B cell (primary cell): ENCODE measurements at regions of chr1 and their contacts with region 1.

Region 1: GRCh38 chr1:77759071-77760028 is at the start of gene USP33:
- DNase-seq: peak; percentile 92
- ATAC-seq: peak; percentile 98
- H3K4me3 ChIP-seq: peak within 1 kb of the TSS; percentile 75 to 91 (median 79)
- H3K4me3 Mint-ChIP-seq: peak within 1 kb of the TSS; percentile 95
- H3K27ac ChIP-seq: peak within 1 kb of the TSS; percentile 31 to 81
- H3K27ac Mint-ChIP-seq: peak within 1 kb of the TSS; percentile 88
- H3K4me1 ChIP-seq: peaks cover 14 to 25% of the 10 kb centered on the region in 2 donors
- H3K4me1 Mint-ChIP-seq: peaks cover 32% of the 10 kb centered on the region
- H3K27me3 ChIP-seq: no peaks in the 10 kb centered on the region
- H3K27me3 Mint-ChIP-seq: peaks cover 3% of the 10 kb centered on the region
- CTCF ChIP-seq: no peak
- total RNA-seq, gene USP33: 83.4 and 95.6 TPM in 2 replicates

Region 2: GRCh38 chr1:77219166-77219887 is 540.0 kb before region 1 on chr1 and contains the start of gene PIGK:
- CTCF ChIA-PET with region 1: no interaction called
- POLR2A ChIA-PET with region 1: no interaction called
- intact Hi-C with region 1: loop called (anchors 5 kb)
- DNase-seq: peak; percentile 89
- ATAC-seq: peak; percentile 96
- H3K4me3 ChIP-seq: peak within 1 kb of the TSS; percentile 85 to 94 (median 93)
- H3K4me3 Mint-ChIP-seq: peak within 1 kb of the TSS; percentile 96
- H3K27ac ChIP-seq: peak within 1 kb of the TSS; percentile 71 to 83
- H3K27ac Mint-ChIP-seq: peak within 1 kb of the TSS; percentile 91
- H3K4me1 ChIP-seq: peaks cover 9 to 11% of the 10 kb centered on the region in 2 donors
- H3K4me1 Mint-ChIP-seq: peaks cover 26% of the 10 kb centered on the region
- H3K27me3 ChIP-seq: no peaks in the 10 kb centered on the region
- H3K27me3 Mint-ChIP-seq: no peaks in the 10 kb centered on the region
- CTCF ChIP-seq: no peak
- total RNA-seq, gene PIGK: 14.9 and 16.4 TPM in 2 replicates

Region 3: DNA sequence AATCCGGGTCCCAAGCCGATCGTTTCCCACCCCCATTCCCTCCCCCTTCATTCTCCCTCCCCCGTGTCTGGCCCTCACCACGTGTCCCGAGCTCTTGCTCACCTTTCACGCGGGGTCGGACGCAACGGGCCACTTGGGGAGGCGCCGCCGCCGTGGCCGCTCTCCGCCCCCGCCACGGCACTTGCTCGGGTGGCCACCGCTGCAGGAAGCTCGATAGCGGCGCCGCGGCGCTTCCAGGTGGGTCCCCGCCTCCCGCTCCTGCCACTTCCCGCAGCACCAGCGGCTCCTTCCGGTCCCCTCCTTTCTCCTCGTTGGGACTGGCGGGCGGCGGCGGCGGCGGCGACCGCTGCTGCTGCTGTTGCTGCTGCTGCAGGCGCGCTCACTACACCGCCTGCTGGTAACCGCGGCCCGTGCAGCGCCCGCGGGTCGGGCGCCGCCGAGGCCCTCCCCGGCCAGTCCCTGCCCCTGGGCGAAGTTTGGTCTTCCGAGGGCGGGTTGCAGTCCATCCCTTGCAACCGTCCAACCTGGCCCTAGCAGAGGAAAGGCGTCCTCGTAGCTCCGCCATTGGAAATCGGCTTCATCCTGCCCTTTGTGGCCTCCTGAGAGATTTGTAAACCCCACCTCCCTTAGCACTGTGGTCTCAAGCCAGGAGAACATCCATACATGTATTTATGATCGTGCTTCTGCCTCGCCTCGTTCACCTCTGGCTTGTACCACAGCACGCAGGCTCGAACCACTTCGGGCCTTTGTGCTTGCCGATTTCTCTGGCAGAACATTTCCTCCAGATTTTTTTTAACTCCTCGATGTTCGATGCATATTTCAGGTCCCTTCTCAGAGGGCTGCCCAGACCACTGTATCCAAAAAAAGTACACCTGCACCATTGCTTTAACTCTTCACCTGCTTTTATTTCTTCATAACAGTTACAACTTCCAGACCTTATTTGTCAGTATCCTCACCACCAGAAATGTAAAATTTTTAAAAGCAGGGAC is 75.9 kb before region 1 on chr1:
- CTCF ChIA-PET with region 1: interaction called, 3 read pairs
- POLR2A ChIA-PET with region 1: interaction called, 4 read pairs
- intact Hi-C with region 1: loop called (anchors 1 kb)
- DNase-seq: peak; percentile 95
- ATAC-seq: peak; percentile 76
- H3K4me3 ChIP-seq: peak overlapping the region; percentile 13 to 89 (median 67)
- H3K4me3 Mint-ChIP-seq: peak overlapping the region; percentile 90
- H3K27ac ChIP-seq: peak overlapping the region; percentile 89 to 98
- H3K27ac Mint-ChIP-seq: peak overlapping the region; percentile 95
- H3K4me1 ChIP-seq: peaks cover 16 to 27% of the 10 kb centered on the region in 2 donors
- H3K4me1 Mint-ChIP-seq: peaks cover 37% of the 10 kb centered on the region
- H3K27me3 ChIP-seq: no peaks in the 10 kb centered on the region
- H3K27me3 Mint-ChIP-seq: no peaks in the 10 kb centered on the region
- CTCF ChIP-seq: peak; percentile 95

Region 4: DNA sequence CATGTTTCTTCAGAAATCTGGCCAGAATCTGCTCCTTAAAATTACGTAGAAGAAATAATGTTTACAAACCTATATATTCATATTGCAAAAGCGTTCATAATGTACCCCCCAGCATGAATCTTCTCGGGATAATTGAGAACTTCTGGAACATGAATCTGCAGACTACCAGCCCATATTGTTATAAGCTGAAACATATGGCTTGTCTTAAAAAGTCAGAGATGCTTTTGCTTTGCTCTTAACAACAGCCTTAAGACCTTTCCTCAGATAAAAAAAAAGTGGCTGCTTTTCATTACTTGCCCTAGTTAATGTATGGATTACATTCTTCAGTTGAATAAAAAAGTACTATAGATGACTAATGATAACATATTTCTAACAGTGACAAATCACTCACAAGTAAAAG is 61.9 kb before region 1 on chr1:
- CTCF ChIA-PET with region 1: no interaction called
- POLR2A ChIA-PET with region 1: no interaction called
- intact Hi-C with region 1: no loop called
- DNase-seq: no peak
- ATAC-seq: no peak
- H3K4me3 ChIP-seq: no peak overlapping the region
- H3K4me3 Mint-ChIP-seq: no peak overlapping the region
- H3K27ac ChIP-seq: no peak overlapping the region
- H3K27ac Mint-ChIP-seq: no peak overlapping the region
- H3K4me1 ChIP-seq: no peaks in the 10 kb centered on the region
- H3K4me1 Mint-ChIP-seq: no peaks in the 10 kb centered on the region
- H3K27me3 ChIP-seq: no peaks in the 10 kb centered on the region
- H3K27me3 Mint-ChIP-seq: no peaks in the 10 kb centered on the region
- CTCF ChIP-seq: no peak

Region 5: DNA sequence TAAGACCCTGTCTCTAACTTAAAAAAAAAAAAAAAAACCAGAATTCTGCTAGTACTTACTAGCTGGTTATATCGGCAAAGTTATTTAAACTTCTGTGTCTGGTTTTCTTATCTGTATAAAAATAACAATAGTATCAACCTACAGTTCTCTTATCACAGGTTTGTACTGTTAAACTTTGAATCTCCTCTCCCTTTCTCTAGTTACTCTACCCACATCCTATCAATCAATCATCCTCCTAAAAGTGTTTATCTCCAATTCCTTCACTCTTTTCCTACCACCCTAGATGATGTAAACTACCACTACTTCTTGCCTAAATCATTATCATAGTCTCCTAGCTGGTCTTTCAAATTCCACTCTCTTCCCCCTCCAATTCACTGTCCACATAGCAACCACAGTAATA is 27.3 kb before region 1 on chr1:
- CTCF ChIA-PET with region 1: no interaction called
- POLR2A ChIA-PET with region 1: no interaction called
- intact Hi-C with region 1: no loop called
- DNase-seq: no peak
- ATAC-seq: no peak
- H3K4me3 ChIP-seq: no peak overlapping the region
- H3K4me3 Mint-ChIP-seq: no peak overlapping the region
- H3K27ac ChIP-seq: no peak overlapping the region
- H3K27ac Mint-ChIP-seq: no peak overlapping the region
- H3K4me1 ChIP-seq: no peaks in the 10 kb centered on the region
- H3K4me1 Mint-ChIP-seq: no peaks in the 10 kb centered on the region
- H3K27me3 ChIP-seq: no peaks in the 10 kb centered on the region
- H3K27me3 Mint-ChIP-seq: no peaks in the 10 kb centered on the region
- CTCF ChIP-seq: no peak

Region 6: DNA sequence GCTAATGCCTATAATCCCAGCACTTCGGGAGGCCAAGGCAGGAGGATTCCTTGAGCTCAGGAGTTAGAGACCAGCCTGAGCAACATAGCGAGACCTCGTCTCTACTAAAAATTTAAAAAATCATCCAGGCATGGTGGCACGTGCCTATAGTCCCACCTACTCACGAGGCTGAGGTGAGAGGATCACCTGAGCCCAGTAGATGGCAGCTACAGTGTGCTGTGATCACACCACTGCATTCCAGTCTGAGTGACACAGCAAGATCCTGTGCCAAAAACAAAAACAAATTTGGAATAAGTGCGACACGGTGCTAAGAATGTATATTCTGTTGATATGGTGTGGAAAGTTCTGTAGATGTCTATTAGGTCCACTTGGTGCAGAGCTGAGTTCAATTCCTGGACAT is 14.8 kb before region 1 on chr1:
- CTCF ChIA-PET with region 1: no interaction called
- POLR2A ChIA-PET with region 1: no interaction called
- intact Hi-C with region 1: no loop called
- DNase-seq: no peak
- ATAC-seq: no peak
- H3K4me3 ChIP-seq: no peak overlapping the region
- H3K4me3 Mint-ChIP-seq: no peak overlapping the region
- H3K27ac ChIP-seq: no peak overlapping the region
- H3K27ac Mint-ChIP-seq: no peak overlapping the region
- H3K4me1 ChIP-seq: no peaks in the 10 kb centered on the region
- H3K4me1 Mint-ChIP-seq: peaks cover 25% of the 10 kb centered on the region
- H3K27me3 ChIP-seq: no peaks in the 10 kb centered on the region
- H3K27me3 Mint-ChIP-seq: no peaks in the 10 kb centered on the region
- CTCF ChIP-seq: no peak

Region 7: GRCh38 chr1:77779529-77780281 is 20.4 kb after region 1 on chr1 and contains the start of gene MIGA1:
- CTCF ChIA-PET with region 1: no interaction called
- POLR2A ChIA-PET with region 1: interaction called, 15 read pairs
- intact Hi-C with region 1: loop called (anchors 1 kb)
- DNase-seq: peak; percentile 92
- ATAC-seq: peak; percentile 97
- H3K4me3 ChIP-seq: peak within 1 kb of the TSS; percentile 57 to 95 (median 83)
- H3K4me3 Mint-ChIP-seq: peak within 1 kb of the TSS; percentile 94
- H3K27ac ChIP-seq: peak within 1 kb of the TSS; percentile 45 to 85
- H3K27ac Mint-ChIP-seq: peak within 1 kb of the TSS; percentile 89
- H3K4me1 ChIP-seq: peaks cover 9 to 11% of the 10 kb centered on the region in 2 donors
- H3K4me1 Mint-ChIP-seq: peaks cover 28% of the 10 kb centered on the region
- H3K27me3 ChIP-seq: peaks cover 0 to 1% (median 0%) of the 10 kb centered on the region in 4 experiments
- H3K27me3 Mint-ChIP-seq: peaks cover 2% of the 10 kb centered on the region
- CTCF ChIP-seq: no peak
- total RNA-seq, gene MIGA1: 18.0 and 20.9 TPM in 2 replicates

Region 8: GRCh38 chr1:77794550-77794949 is 35.2 kb after region 1 on chr1:
- CTCF ChIA-PET with region 1: no interaction called
- POLR2A ChIA-PET with region 1: no interaction called
- intact Hi-C with region 1: loop called (anchors 5 kb)
- DNase-seq: no peak
- ATAC-seq: no peak
- H3K4me3 ChIP-seq: no peak overlapping the region
- H3K4me3 Mint-ChIP-seq: no peak overlapping the region
- H3K27ac ChIP-seq: no peak overlapping the region
- H3K27ac Mint-ChIP-seq: no peak overlapping the region
- H3K4me1 ChIP-seq: no peaks in the 10 kb centered on the region
- H3K4me1 Mint-ChIP-seq: peaks cover 7% of the 10 kb centered on the region
- H3K27me3 ChIP-seq: no peaks in the 10 kb centered on the region
- H3K27me3 Mint-ChIP-seq: no peaks in the 10 kb centered on the region
- CTCF ChIP-seq: no peak

Region 9: DNA sequence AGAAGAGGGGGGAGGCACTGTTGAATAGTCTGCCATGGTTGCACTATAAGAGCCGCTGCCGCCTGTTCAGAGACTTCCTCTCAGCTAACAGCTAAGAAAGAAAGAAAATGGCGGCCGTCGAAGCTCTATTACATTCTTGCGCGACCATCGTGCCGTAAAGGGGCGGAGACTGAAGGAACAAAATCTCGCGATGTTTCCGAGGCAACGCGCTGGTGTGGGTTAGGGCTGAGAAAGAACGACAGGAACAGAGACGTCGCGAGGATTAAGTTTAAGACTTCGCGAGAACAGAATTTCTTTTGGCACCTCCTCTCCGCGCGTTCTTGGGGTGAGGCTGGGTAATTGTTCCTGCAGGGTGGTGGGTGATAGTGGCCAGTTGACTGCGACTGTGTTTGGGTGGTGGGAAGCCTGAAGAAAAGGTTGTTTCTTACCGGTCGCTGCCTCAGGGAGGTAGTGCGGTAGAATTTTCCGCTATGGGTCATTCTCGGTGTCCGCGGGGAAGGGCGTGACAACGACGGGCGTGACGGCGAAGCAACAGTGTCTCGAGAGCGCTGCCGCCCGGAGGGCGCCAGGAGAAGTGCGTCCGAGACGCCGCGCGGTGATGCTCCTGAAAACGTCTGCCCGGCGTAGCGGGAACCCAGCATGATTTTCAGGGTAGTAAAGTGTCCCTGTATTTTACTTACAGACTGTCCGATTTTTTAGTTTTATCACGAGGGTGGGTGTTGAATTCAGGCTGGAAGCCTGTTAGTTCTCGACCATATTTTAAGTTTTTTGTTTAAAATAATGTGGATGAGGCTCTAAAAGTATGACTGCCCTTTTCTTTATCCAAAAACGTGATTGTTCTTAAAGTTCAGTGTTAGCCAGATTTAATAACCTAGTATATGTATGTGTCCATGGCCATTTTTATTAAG is 219.9 kb after region 1 on chr1 and contains the start of gene FUBP1:
- CTCF ChIA-PET with region 1: no interaction called
- POLR2A ChIA-PET with region 1: no interaction called
- intact Hi-C with region 1: loop called (anchors 1 kb)
- DNase-seq: peak; percentile 99
- ATAC-seq: peak; percentile 77
- H3K4me3 ChIP-seq: peak within 1 kb of the TSS; percentile 77 to 100 (median 96)
- H3K4me3 Mint-ChIP-seq: no peak within 1 kb of the TSS
- H3K27ac ChIP-seq: peak within 1 kb of the TSS; percentile 94 to 99
- H3K27ac Mint-ChIP-seq: no peak within 1 kb of the TSS
- H3K4me1 ChIP-seq: peaks cover 40 to 47% of the 10 kb centered on the region in 2 donors
- H3K4me1 Mint-ChIP-seq: peaks cover 38% of the 10 kb centered on the region
- H3K27me3 ChIP-seq: no peaks in the 10 kb centered on the region
- H3K27me3 Mint-ChIP-seq: no peaks in the 10 kb centered on the region
- CTCF ChIP-seq: peak; percentile 77
- total RNA-seq, gene FUBP1: 249 and 254 TPM in 2 replicates

Region 10: GRCh38 chr1:78004719-78005447 is 245.5 kb after region 1 on chr1 and contains the start of gene DNAJB4:
- CTCF ChIA-PET with region 1: no interaction called
- POLR2A ChIA-PET with region 1: no interaction called
- intact Hi-C with region 1: loop called (anchors 1 kb)
- DNase-seq: peak; percentile 91
- ATAC-seq: peak; percentile 99
- H3K4me3 ChIP-seq: peak within 1 kb of the TSS; percentile 55 to 95 (median 66)
- H3K4me3 Mint-ChIP-seq: peak within 1 kb of the TSS; percentile 85
- H3K27ac ChIP-seq: peak within 1 kb of the TSS; percentile 97 to 98
- H3K27ac Mint-ChIP-seq: peak within 1 kb of the TSS; percentile 97
- H3K4me1 ChIP-seq: peaks cover 0 to 20% of the 10 kb centered on the region in 2 donors
- H3K4me1 Mint-ChIP-seq: peaks cover 44% of the 10 kb centered on the region
- H3K27me3 ChIP-seq: no peaks in the 10 kb centered on the region
- H3K27me3 Mint-ChIP-seq: no peaks in the 10 kb centered on the region
- CTCF ChIP-seq: no peak
- total RNA-seq, gene DNAJB4: 16.2 and 17.0 TPM in 2 replicates

Region 11: GRCh38 chr1:78019018-78019417 is 259.7 kb after region 1 on chr1:
- CTCF ChIA-PET with region 1: no interaction called
- POLR2A ChIA-PET with region 1: no interaction called
- intact Hi-C with region 1: no loop called
- DNase-seq: no peak
- ATAC-seq: no peak
- H3K4me3 ChIP-seq: no peak overlapping the region
- H3K4me3 Mint-ChIP-seq: no peak overlapping the region
- H3K27ac ChIP-seq: no peak overlapping the region
- H3K27ac Mint-ChIP-seq: no peak overlapping the region
- H3K4me1 ChIP-seq: peaks cover 0 to 4% of the 10 kb centered on the region in 2 donors
- H3K4me1 Mint-ChIP-seq: peaks cover 2% of the 10 kb centered on the region
- H3K27me3 ChIP-seq: no peaks in the 10 kb centered on the region
- H3K27me3 Mint-ChIP-seq: no peaks in the 10 kb centered on the region
- CTCF ChIP-seq: no peak